CD4-positive, alpha-beta memory T cell (primary cell): ENCODE measurements at regions of chr13 and their contacts with region 1.

Region 1: GRCh38 chr13:75326173-75327134 is 155.5 kb downstream of the TBC1D4 start:
- DNase-seq: peak; percentile 79 to 87 (median 82)
- H3K4me3 ChIP-seq: peak overlapping the region; percentile 81 to 82
- H3K4me3 Mint-ChIP-seq: peak overlapping the region; percentile 89 to 98 (median 94)
- H3K27ac ChIP-seq: peak overlapping the region; percentile 85
- H3K27ac Mint-ChIP-seq: peak overlapping the region; percentile 92 to 99 (median 98)
- H3K4me1 ChIP-seq: peaks cover 33% of the 10 kb centered on the region
- H3K4me1 Mint-ChIP-seq: peaks cover 21 to 57% (median 35%) of the 10 kb centered on the region in 4 donors
- H3K27me3 ChIP-seq: no peaks in the 10 kb centered on the region
- H3K27me3 Mint-ChIP-seq: no peaks in the 10 kb centered on the region

Region 2: GRCh38 chr13:75294110-75294509 is 32.3 kb before region 1 on chr13:
- CTCF ChIA-PET with region 1: interaction called, 3 read pairs
- POLR2A ChIA-PET with region 1: interaction called, 10 read pairs
- intact Hi-C with region 1: no loop called
- DNase-seq: no peak
- H3K4me3 ChIP-seq: no peak overlapping the region
- H3K4me3 Mint-ChIP-seq: no peak overlapping the region
- H3K27ac ChIP-seq: no peak overlapping the region
- H3K27ac Mint-ChIP-seq: peak overlapping the region in 2 of 7 donors; percentile 1 to 21
- H3K4me1 ChIP-seq: peaks cover 31% of the 10 kb centered on the region
- H3K4me1 Mint-ChIP-seq: peaks cover 12 to 31% (median 20%) of the 10 kb centered on the region in 4 donors
- H3K27me3 ChIP-seq: no peaks in the 10 kb centered on the region
- H3K27me3 Mint-ChIP-seq: no peaks in the 10 kb centered on the region

Region 3: GRCh38 chr13:75312884-75313520 is 13.5 kb before region 1 on chr13:
- CTCF ChIA-PET with region 1: interaction called, 37 read pairs
- POLR2A ChIA-PET with region 1: interaction called, 129 read pairs
- intact Hi-C with region 1: loop called (anchors 1 kb)
- DNase-seq: peak in 3 of 5 donors; percentile 34 to 52 (median 41)
- H3K4me3 ChIP-seq: no peak overlapping the region
- H3K4me3 Mint-ChIP-seq: peak overlapping the region in 2 of 8 donors; percentile 0 to 56
- H3K27ac ChIP-seq: no peak overlapping the region
- H3K27ac Mint-ChIP-seq: peak overlapping the region in 5 of 7 donors; percentile 44 to 83 (median 72)
- H3K4me1 ChIP-seq: peaks cover 38% of the 10 kb centered on the region
- H3K4me1 Mint-ChIP-seq: peaks cover 23 to 38% (median 31%) of the 10 kb centered on the region in 4 donors
- H3K27me3 ChIP-seq: no peaks in the 10 kb centered on the region
- H3K27me3 Mint-ChIP-seq: no peaks in the 10 kb centered on the region

Region 4: GRCh38 chr13:75372517-75372916 is 46.1 kb after region 1 on chr13:
- CTCF ChIA-PET with region 1: interaction called, 13 read pairs
- POLR2A ChIA-PET with region 1: interaction called, 7 read pairs
- intact Hi-C with region 1: no loop called
- DNase-seq: peak in 4 of 5 donors; percentile 31 to 42 (median 36)
- H3K4me3 ChIP-seq: no peak overlapping the region
- H3K4me3 Mint-ChIP-seq: no peak overlapping the region
- H3K27ac ChIP-seq: no peak overlapping the region
- H3K27ac Mint-ChIP-seq: no peak overlapping the region
- H3K4me1 ChIP-seq: no peaks in the 10 kb centered on the region
- H3K4me1 Mint-ChIP-seq: no peaks in the 10 kb centered on the region
- H3K27me3 ChIP-seq: no peaks in the 10 kb centered on the region
- H3K27me3 Mint-ChIP-seq: no peaks in the 10 kb centered on the region

Region 5: DNA sequence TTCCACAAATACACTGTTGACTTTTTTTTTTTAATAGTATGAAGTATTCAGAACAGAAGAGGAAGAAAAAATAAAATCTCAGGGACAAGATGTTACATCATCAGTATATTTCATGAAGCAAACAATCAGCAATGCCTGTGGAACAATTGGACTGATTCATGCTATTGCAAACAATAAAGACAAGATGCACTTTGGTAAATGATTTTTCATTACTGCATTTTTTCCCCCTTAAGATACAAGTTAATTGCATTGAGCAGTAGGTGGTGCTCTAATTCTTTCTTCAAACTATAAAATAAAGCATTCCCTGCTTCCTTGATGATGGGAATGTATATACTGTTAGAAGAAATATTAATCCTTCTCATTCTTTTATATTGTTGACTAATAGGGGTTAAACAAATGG is 240.2 kb after region 1 on chr13:
- CTCF ChIA-PET with region 1: no interaction called
- POLR2A ChIA-PET with region 1: no interaction called
- intact Hi-C with region 1: no loop called
- DNase-seq: no peak
- H3K4me3 ChIP-seq: no peak overlapping the region
- H3K4me3 Mint-ChIP-seq: no peak overlapping the region
- H3K27ac ChIP-seq: no peak overlapping the region
- H3K27ac Mint-ChIP-seq: no peak overlapping the region
- H3K4me1 ChIP-seq: no peaks in the 10 kb centered on the region
- H3K4me1 Mint-ChIP-seq: peaks cover 0 to 5% (median 4%) of the 10 kb centered on the region in 4 donors
- H3K27me3 ChIP-seq: no peaks in the 10 kb centered on the region
- H3K27me3 Mint-ChIP-seq: no peaks in the 10 kb centered on the region

Region 6: DNA sequence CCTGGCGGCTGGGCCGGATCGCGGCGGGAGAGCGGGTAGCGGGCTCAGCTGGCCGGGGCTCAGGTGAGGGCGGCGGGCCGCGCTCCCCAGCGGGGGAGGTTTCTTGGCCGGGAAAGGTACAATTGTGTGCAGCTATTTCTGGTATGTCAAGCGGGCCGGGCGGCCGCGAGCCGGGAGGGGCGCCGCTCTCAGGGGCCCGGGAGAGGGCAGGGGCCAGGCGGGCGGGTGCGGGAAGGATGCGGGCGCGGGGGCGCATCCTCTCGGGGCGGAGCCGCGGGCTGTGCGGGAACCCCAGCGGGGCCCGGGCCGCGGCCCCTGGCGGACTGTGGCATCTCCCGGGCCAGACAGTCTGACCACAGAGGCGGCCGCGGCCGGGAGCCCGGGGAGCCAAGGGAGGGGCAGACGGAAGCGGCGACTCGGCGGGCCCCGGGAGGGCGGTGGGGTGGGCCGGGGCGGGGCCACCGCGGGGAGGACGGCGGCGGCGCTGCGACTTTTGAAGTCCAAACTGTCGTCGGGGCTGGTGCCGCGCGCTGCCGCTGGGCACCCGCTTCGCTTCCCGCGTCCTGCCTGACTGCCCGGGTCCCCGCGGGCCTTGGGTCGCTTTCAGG is 309.5 kb after region 1 on chr13 and contains the start of gene LMO7:
- CTCF ChIA-PET with region 1: no interaction called
- POLR2A ChIA-PET with region 1: no interaction called
- intact Hi-C with region 1: loop called (anchors 5 kb)
- DNase-seq: peak; percentile 51 to 65 (median 55)
- H3K4me3 ChIP-seq: peak within 1 kb of the TSS; percentile 59 to 70
- H3K4me3 Mint-ChIP-seq: peak within 1 kb of the TSS; percentile 82 to 90 (median 86)
- H3K27ac ChIP-seq: peak within 1 kb of the TSS; percentile 31
- H3K27ac Mint-ChIP-seq: peak within 1 kb of the TSS; percentile 47 to 88 (median 74)
- H3K4me1 ChIP-seq: peaks cover 6% of the 10 kb centered on the region
- H3K4me1 Mint-ChIP-seq: peaks cover 12 to 19% (median 14%) of the 10 kb centered on the region in 4 donors
- H3K27me3 ChIP-seq: no peaks in the 10 kb centered on the region
- H3K27me3 Mint-ChIP-seq: peaks cover 0 to 4% of the 10 kb centered on the region in 2 donors
- total RNA-seq, gene LMO7: 25.7 to 29.4 TPM

Region 7: GRCh38 chr13:76991796-76992547 is 1665.5 kb after region 1 on chr13 and contains the start of gene CLN5:
- CTCF ChIA-PET with region 1: no interaction called
- POLR2A ChIA-PET with region 1: interaction called, 3 read pairs
- intact Hi-C with region 1: loop called (anchors 10 kb)
- DNase-seq: peak; percentile 95 to 98 (median 97)
- H3K4me3 ChIP-seq: peak within 1 kb of the TSS; percentile 88 to 93
- H3K4me3 Mint-ChIP-seq: peak within 1 kb of the TSS; percentile 92 to 99 (median 96)
- H3K27ac ChIP-seq: peak within 1 kb of the TSS; percentile 95
- H3K27ac Mint-ChIP-seq: peak within 1 kb of the TSS; percentile 98 to 100 (median 100)
- H3K4me1 ChIP-seq: peaks cover 37% of the 10 kb centered on the region
- H3K4me1 Mint-ChIP-seq: peaks cover 26 to 52% (median 41%) of the 10 kb centered on the region in 4 donors
- H3K27me3 ChIP-seq: no peaks in the 10 kb centered on the region
- H3K27me3 Mint-ChIP-seq: peaks cover 3 to 7% of the 10 kb centered on the region in 2 donors
- total RNA-seq, gene CLN5: 41.5 to 48.6 TPM